Gastrocnemius medialis (tissue), 4 donors: ENCODE measurements at regions of chr12 and their contacts with region 1.

Region 1: GRCh38 chr12:69738351-69739286 is at the start of gene RAB3IP:
- DNase-seq: peak; percentile 82 to 85
- ATAC-seq: peak; percentile 91 to 93
- H3K4me3 ChIP-seq: peak within 1 kb of the TSS; percentile 67 to 95 (median 74)
- H3K27ac ChIP-seq: peak within 1 kb of the TSS; percentile 74 to 89 (median 86)
- H3K4me1 ChIP-seq: peaks cover 7 to 8% of the 10 kb centered on the region in 2 donors
- H3K27me3 ChIP-seq: no peaks in the 10 kb centered on the region
- CTCF ChIP-seq: peak; percentile 17 to 86 (median 61)
- POLR2A ChIP-seq: peak; percentile 74 to 81
- total RNA-seq, gene RAB3IP: 18.6 to 27.4 (median 20.3) TPM

Region 2: GRCh38 chr12:69254046-69254445 is 484.6 kb before region 1 on chr12:
- in situ Hi-C with region 1: no loop called
- intact Hi-C with region 1: loop called (anchors 10 kb)
- DNase-seq: no peak
- ATAC-seq: peak in 1 of 2 donors; percentile 78
- H3K4me3 ChIP-seq: no peak overlapping the region
- H3K27ac ChIP-seq: no peak overlapping the region
- H3K4me1 ChIP-seq: peaks cover 7 to 9% of the 10 kb centered on the region in 2 donors
- H3K27me3 ChIP-seq: no peaks in the 10 kb centered on the region
- CTCF ChIP-seq: peak in 4 of 5 experiments; percentile 50 to 66 (median 58)
- POLR2A ChIP-seq: no peak

Region 3: GRCh38 chr12:69359531-69360347 is 378.9 kb before region 1 on chr12 and contains the start of gene YEATS4:
- in situ Hi-C with region 1: no loop called
- intact Hi-C with region 1: loop called (anchors 10 kb)
- DNase-seq: peak; percentile 51 to 76
- ATAC-seq: peak; percentile 90 to 92
- H3K4me3 ChIP-seq: peak within 1 kb of the TSS; percentile 84 to 89 (median 86)
- H3K27ac ChIP-seq: peak within 1 kb of the TSS; percentile 86 to 93 (median 91)
- H3K4me1 ChIP-seq: peaks cover 4 to 13% of the 10 kb centered on the region in 2 donors
- H3K27me3 ChIP-seq: no peaks in the 10 kb centered on the region
- CTCF ChIP-seq: no peak
- POLR2A ChIP-seq: peak; percentile 31 to 51
- total RNA-seq, gene YEATS4: 12.5 to 34.6 (median 25.8) TPM

Region 4: DNA sequence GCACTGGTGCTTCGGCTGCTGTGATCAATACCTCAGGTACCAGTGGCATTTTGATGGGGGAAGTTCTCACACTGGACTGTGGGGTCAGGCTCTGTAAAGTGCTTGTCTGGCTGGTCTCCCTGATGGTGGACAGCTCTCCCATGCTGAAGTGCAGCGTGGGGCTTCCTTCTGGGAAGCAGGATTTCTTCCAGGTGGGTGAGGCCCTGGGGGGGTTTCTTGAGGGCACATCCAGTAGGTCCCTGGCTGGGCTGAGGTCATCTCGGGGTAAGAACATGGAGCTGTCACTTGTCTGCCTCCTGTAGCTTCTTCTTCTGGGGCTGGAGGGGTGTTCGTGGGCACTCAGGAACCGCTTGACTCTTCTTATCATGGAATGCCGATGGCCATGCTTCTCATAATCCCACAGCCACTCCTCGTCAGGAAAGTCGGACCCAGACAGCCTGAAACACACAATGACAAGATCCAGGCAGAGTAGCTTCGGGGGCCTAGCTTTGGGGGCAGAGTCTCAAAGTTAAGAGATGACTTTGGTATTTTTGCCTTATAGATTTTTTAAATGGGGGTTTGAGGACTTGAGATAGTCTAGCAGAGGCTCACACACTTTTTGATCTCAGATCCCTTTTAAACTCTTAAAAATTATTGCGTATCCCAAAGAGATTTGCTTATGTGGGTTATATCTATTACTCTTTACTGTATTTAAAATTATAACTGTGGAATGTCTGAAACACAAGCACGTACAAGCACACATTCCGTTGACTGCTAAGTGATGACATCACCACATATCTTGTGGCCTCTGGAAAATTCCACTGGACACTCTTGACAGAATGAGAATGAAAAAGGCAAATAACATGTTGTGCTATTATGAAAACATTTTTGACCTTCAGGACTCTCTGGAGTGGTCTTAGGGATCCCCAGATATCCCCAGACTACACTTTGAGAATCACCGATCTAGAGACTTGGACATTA is 83.0 kb before region 1 on chr12:
- in situ Hi-C with region 1: no loop called
- intact Hi-C with region 1: loop called (anchors 2 kb)
- DNase-seq: no peak
- ATAC-seq: no peak
- H3K4me3 ChIP-seq: no peak overlapping the region
- H3K27ac ChIP-seq: peak overlapping the region; percentile 80 to 91 (median 86)
- H3K4me1 ChIP-seq: peaks cover 21 to 32% of the 10 kb centered on the region in 2 donors
- H3K27me3 ChIP-seq: no peaks in the 10 kb centered on the region
- CTCF ChIP-seq: no peak
- POLR2A ChIP-seq: no peak

Region 5: DNA sequence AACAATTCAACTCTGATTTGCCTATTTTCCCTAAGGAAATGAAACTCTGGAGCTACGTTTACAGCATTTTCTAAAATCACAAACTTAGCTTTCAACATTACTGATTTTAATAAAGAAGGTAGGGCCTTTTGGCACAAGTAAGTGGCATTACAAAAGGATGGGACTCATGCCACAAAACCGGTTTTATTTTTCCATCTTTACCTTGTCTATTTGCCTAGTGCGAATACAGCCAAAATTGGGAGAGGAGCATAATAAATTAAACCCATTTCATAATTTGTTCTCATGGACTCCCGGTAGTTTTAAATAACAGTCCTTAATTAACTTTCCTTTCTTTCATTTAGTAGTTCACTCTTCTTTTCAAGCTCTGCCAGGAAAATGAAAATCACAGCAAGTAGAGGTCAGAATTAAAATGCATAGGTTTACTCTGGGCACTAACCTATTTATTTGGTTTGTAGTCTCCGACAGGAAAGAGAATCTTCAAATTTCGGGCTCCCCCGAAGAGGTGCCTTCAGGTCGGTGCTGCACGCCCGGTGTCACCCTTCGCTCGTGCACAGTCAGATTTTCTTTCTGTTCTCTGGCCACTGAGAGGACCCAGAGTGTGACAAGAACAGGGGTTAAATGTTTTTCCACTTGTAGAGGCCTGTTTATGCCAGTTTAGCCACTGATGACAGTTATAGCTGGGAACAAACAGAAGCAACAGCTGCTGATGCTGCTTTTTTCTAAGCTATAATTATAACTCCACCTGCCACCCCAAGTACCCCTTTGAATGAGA is 39.7 kb before region 1 on chr12 and contains the start of gene BEST3:
- in situ Hi-C with region 1: no loop called
- intact Hi-C with region 1: loop called (anchors 5 kb)
- DNase-seq: peak; percentile 80 to 82
- ATAC-seq: peak; percentile 95 to 98
- H3K4me3 ChIP-seq: peak within 1 kb of the TSS; percentile 50 to 62 (median 56)
- H3K27ac ChIP-seq: peak within 1 kb of the TSS; percentile 77 to 93 (median 90)
- H3K4me1 ChIP-seq: peaks cover 24 to 42% of the 10 kb centered on the region in 2 donors
- H3K27me3 ChIP-seq: no peaks in the 10 kb centered on the region
- CTCF ChIP-seq: no peak
- POLR2A ChIP-seq: peak; percentile 59 to 91
- total RNA-seq, gene BEST3: 61.8 to 163 (median 119) TPM

Region 6: GRCh38 chr12:69885658-69886057 is 147.0 kb after region 1 on chr12:
- in situ Hi-C with region 1: no loop called
- intact Hi-C with region 1: no loop called
- DNase-seq: no peak
- ATAC-seq: no peak
- H3K4me3 ChIP-seq: no peak overlapping the region
- H3K27ac ChIP-seq: no peak overlapping the region
- H3K4me1 ChIP-seq: no peaks in the 10 kb centered on the region
- H3K27me3 ChIP-seq: no peaks in the 10 kb centered on the region
- CTCF ChIP-seq: no peak
- POLR2A ChIP-seq: no peak

Region 7: GRCh38 chr12:70178038-70178437 is 439.4 kb after region 1 on chr12:
- in situ Hi-C with region 1: no loop called
- intact Hi-C with region 1: no loop called
- DNase-seq: no peak
- ATAC-seq: peak in 1 of 2 donors; percentile 50
- H3K4me3 ChIP-seq: no peak overlapping the region
- H3K27ac ChIP-seq: no peak overlapping the region
- H3K4me1 ChIP-seq: no peaks in the 10 kb centered on the region
- H3K27me3 ChIP-seq: no peaks in the 10 kb centered on the region
- CTCF ChIP-seq: no peak
- POLR2A ChIP-seq: no peak

Region 8: DNA sequence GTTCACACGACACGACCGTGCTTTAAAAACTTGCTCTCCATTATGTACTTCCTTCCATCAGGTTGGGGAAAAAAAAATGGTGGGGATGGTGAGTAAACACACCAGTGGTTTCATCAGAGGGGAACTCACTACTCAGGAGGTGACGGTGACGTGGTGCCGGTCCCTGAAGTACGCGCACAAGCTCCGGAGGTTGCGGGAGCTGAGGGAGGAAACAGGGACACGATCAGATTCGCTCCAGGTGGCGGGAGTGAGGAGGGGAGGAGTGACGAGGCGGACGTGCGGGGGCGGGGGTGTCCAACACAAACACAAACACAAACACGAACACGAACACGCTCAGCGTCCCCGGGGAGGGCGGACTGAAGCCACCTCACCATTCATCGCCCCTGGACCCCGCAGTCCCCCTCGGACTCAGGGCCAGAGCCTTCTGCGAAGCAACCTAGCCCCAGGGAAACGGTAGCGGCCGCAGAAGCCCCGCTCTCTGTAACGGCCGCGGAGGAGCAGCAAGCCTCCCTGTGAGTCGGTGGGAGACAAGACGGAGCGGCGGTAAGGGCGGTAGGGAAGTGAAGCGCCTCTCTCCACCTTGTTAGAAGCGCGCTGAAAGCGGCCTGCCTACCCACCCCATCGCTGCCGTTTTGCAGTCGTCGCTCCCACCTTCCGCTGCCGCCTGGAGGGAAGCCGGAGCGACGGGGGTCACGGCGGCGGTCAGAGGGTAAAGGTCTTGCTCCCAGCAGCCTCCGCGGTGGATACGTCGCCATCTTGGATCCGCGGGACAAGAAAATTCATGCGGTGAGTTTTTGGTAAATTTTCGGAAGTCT is 504.3 kb after region 1 on chr12 and contains the start of gene CNOT2:
- in situ Hi-C with region 1: no loop called
- intact Hi-C with region 1: loop called (anchors 5 kb)
- DNase-seq: peak; percentile 85 to 90
- ATAC-seq: peak; percentile 94
- H3K4me3 ChIP-seq: peak within 1 kb of the TSS; percentile 70 to 95 (median 82)
- H3K27ac ChIP-seq: peak within 1 kb of the TSS; percentile 92 to 99 (median 98)
- H3K4me1 ChIP-seq: peaks cover 38 to 42% of the 10 kb centered on the region in 2 donors
- H3K27me3 ChIP-seq: no peaks in the 10 kb centered on the region
- CTCF ChIP-seq: no peak
- POLR2A ChIP-seq: peak; percentile 65 to 80
- total RNA-seq, gene CNOT2: 64.1 to 107 (median 71.6) TPM